ENCODE measurements at regions of chr5 and their contacts with region 1.

Region 1: GRCh38 chr5:109479260-109479860 is 69.6 kb upstream of the PJA2 start:
- DNase-seq: no peak
- H3K4me3 ChIP-seq: no peak overlapping the region
- H3K4me3 Mint-ChIP-seq: no peak overlapping the region
- H3K27ac Mint-ChIP-seq: no peak overlapping the region
- H3K4me1 ChIP-seq: no peaks in the 10 kb centered on the region
- H3K4me1 Mint-ChIP-seq: no peaks in the 10 kb centered on the region
- H3K27me3 ChIP-seq: no peaks in the 10 kb centered on the region
- H3K27me3 Mint-ChIP-seq: peaks cover 3% of the 10 kb centered on the region
- CTCF ChIP-seq: peak; percentile 17 to 25

Region 2: DNA sequence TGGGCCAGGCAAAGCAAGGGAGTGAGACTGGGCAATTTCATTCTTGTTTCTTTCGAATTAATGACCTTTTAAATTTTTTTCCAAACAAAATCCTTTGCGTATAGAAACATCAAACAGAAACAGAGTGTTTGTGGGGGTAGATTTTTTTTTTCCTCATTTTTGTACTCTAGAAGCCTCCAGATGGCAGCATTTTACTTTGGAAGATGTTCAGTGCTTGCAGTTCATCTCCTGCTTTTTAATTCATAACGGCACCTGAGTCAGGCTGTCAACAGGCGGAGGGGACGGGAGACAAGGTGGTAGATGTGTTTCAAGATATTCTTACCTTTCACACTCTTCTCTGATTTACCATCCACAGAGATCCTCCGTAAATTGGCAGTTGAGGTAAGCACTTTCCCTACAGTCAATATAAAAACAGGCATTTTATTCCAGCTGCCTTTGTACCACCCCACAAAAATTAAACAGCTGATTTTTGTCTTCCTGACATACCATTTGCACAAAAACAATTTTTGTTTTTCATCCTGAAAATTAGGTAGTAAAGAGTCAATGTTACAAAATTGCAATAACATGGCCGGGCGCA is 997.9 kb before region 1 on chr5:
- CTCF ChIA-PET with region 1: no interaction called
- POLR2A ChIA-PET with region 1: no interaction called
- intact Hi-C with region 1: loop called (anchors 5 kb)
- DNase-seq: peak; percentile 35 to 51
- H3K4me3 ChIP-seq: no peak overlapping the region
- H3K4me3 Mint-ChIP-seq: no peak overlapping the region
- H3K27ac Mint-ChIP-seq: no peak overlapping the region
- H3K4me1 ChIP-seq: no peaks in the 10 kb centered on the region
- H3K4me1 Mint-ChIP-seq: no peaks in the 10 kb centered on the region
- H3K27me3 ChIP-seq: no peaks in the 10 kb centered on the region
- H3K27me3 Mint-ChIP-seq: peaks cover 10% of the 10 kb centered on the region
- CTCF ChIP-seq: peak; percentile 44 to 51

Region 3: DNA sequence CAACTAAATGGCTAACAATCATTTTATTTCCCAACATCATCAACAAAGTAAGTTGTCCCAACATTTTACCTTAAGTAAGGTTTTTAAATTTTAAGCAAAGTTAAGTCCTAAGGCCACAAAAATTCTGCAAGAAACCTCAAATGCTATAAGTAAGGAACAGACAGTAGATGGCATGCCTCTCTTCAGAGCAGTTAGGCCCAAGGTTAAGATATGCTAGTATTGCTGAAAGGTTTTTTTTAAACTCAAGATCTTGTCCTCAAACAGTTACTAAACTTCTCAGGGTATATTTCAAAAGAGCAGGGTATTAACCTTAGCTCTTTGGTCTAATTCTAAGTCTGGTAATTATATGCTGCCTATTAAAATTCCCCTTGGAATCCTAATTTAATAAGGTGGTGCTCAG is 104.7 kb before region 1 on chr5:
- CTCF ChIA-PET with region 1: no interaction called
- POLR2A ChIA-PET with region 1: no interaction called
- intact Hi-C with region 1: loop called (anchors 10 kb)
- DNase-seq: no peak
- H3K4me3 ChIP-seq: no peak overlapping the region
- H3K4me3 Mint-ChIP-seq: no peak overlapping the region
- H3K27ac Mint-ChIP-seq: no peak overlapping the region
- H3K4me1 ChIP-seq: no peaks in the 10 kb centered on the region
- H3K4me1 Mint-ChIP-seq: no peaks in the 10 kb centered on the region
- H3K27me3 ChIP-seq: no peaks in the 10 kb centered on the region
- H3K27me3 Mint-ChIP-seq: no peaks in the 10 kb centered on the region
- CTCF ChIP-seq: no peak

Measured in Caco-2 (cell line).